ENCODE measurements at regions of chr1 and their contacts with region 1.

Region 1: DNA sequence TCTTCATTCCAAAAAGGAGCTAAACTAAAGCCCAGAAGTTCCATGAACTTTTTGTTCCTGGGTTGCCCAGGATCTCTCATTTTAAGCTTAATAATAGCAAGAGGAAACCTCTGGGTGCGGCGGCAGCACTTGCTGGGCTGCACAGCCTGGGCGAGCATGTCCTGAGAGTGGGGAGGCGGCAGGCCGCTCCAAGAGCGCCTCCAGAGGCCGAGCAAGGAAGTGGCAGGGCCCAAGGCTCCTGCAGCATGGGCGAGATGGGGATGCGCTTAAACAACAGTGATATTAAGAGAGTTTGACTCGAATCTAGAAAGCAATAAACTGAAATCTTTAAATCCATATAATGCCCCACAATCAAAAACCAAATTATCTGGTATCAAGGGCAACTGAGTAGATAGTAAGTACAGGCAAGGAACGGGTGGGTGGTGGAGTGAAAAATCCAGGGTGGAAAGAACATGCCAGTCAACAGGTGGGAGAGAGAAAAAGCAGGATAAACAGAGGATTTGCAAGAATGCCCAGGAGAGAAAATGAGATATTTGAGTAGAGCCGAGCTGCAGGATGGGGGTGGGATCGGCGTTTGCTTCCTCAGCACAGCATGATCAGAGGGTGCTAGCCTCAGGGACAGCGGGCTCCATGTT is 14.1 kb upstream of the TNR start:
- DNase-seq: peak; percentile 59 to 81
- H3K4me3 ChIP-seq: no peak overlapping the region
- H3K27ac ChIP-seq: no peak overlapping the region
- H3K4me1 ChIP-seq: no peaks in the 10 kb centered on the region; a peak in 1 of 7 replicates
- H3K27me3 ChIP-seq: no peaks in the 10 kb centered on the region
- CTCF ChIP-seq: peak; percentile 88 to 94 (median 89)
- EP300 ChIP-seq: no peak
- POLR2A ChIP-seq: no peak
- RAD21 ChIP-seq: peak; percentile 80 to 89

Region 2: DNA sequence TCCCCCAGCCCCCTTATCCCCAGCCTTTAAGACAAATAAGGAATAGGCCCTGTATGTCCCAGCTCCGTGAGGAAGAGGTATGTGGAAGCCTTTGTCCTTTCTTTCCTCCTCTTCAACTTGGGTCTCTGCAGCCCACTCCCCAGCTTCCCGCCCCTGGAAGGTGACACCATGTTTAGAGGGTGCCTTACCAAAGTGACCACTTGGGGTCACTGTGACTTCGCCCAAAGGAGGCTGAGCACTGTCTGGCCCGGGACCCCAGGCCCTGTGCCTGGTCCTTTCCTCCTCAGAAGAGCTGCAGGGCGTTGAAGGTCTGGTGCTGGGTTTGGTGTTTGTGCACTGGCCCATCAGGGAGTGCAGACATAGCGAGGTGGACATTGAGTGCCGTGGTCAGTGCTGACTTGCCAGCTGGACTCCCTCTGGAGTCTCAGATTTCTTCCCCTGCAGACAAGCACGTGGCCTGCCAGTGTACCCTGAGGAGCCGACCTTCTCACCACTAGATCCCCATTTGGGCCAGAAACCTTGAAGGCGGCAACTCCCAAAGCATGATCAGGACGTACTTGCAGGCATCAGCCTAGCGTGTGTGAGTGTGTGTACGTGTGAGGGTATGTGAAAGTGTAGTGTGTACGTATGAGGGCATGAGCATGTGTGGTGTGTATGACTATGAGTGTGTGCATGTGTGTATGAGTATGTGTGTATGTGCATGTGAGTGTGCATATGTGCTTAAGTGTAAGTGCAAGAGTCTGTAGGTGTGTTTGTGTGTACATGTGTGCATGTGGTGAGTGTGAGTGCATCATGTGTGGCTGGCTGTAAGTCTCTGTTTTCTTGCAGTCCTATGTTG is 383.5 kb before region 1 on chr1:
- CTCF ChIA-PET with region 1: interaction called, 25 read pairs
- POLR2A ChIA-PET with region 1: no interaction called
- DNase-seq: peak; percentile 21 to 85
- H3K4me3 ChIP-seq: no peak overlapping the region
- H3K27ac ChIP-seq: no peak overlapping the region
- H3K4me1 ChIP-seq: peaks cover 0 to 4% (median 0%) of the 10 kb centered on the region in 4 experiments; a peak in 3 of 7 replicates
- H3K27me3 ChIP-seq: no peaks in the 10 kb centered on the region; a peak in 1 of 7 replicates
- CTCF ChIP-seq: peak; percentile 86 to 91 (median 90)
- EP300 ChIP-seq: no peak
- POLR2A ChIP-seq: no peak
- RAD21 ChIP-seq: peak; percentile 97 to 99

Region 3: GRCh38 chr1:175683491-175684298 is 73.8 kb before region 1 on chr1:
- CTCF ChIA-PET with region 1: interaction called, 15 read pairs
- POLR2A ChIA-PET with region 1: no interaction called
- DNase-seq: no peak
- H3K4me3 ChIP-seq: no peak overlapping the region
- H3K27ac ChIP-seq: no peak overlapping the region
- H3K4me1 ChIP-seq: peaks cover 0 to 3% (median 0%) of the 10 kb centered on the region in 4 experiments; a peak in 1 of 7 replicates
- H3K27me3 ChIP-seq: no peaks in the 10 kb centered on the region
- CTCF ChIP-seq: no peak
- EP300 ChIP-seq: no peak
- POLR2A ChIP-seq: no peak
- RAD21 ChIP-seq: no peak

Region 4: GRCh38 chr1:175708788-175709187 is 48.7 kb before region 1 on chr1:
- CTCF ChIA-PET with region 1: no interaction called
- POLR2A ChIA-PET with region 1: no interaction called
- DNase-seq: no peak
- H3K4me3 ChIP-seq: no peak overlapping the region
- H3K27ac ChIP-seq: no peak overlapping the region
- H3K4me1 ChIP-seq: peaks cover 0 to 2% (median 0%) of the 10 kb centered on the region in 4 experiments; a peak in 3 of 7 replicates
- H3K27me3 ChIP-seq: no peaks in the 10 kb centered on the region
- CTCF ChIP-seq: no peak
- EP300 ChIP-seq: no peak
- POLR2A ChIP-seq: no peak
- RAD21 ChIP-seq: no peak

Region 5: GRCh38 chr1:175742790-175743459 is 14.6 kb before region 1 on chr1:
- CTCF ChIA-PET with region 1: interaction called, 277 read pairs
- POLR2A ChIA-PET with region 1: no interaction called
- DNase-seq: peak in 1 of 2 experiments; percentile 59
- H3K4me3 ChIP-seq: peak overlapping the region; percentile 12 to 31 (median 18); a peak in 6 of 8 replicates
- H3K27ac ChIP-seq: no peak overlapping the region
- H3K4me1 ChIP-seq: peaks cover 0 to 7% (median 3%) of the 10 kb centered on the region in 4 experiments; a peak in 3 of 7 replicates
- H3K27me3 ChIP-seq: peaks cover 0 to 6% (median 0%) of the 10 kb centered on the region in 4 experiments; a peak in 2 of 7 replicates
- CTCF ChIP-seq: no peak
- EP300 ChIP-seq: no peak
- POLR2A ChIP-seq: no peak
- RAD21 ChIP-seq: peak in 1 of 2 experiments; percentile 31; a peak in 1 of 4 replicates

Region 6: DNA sequence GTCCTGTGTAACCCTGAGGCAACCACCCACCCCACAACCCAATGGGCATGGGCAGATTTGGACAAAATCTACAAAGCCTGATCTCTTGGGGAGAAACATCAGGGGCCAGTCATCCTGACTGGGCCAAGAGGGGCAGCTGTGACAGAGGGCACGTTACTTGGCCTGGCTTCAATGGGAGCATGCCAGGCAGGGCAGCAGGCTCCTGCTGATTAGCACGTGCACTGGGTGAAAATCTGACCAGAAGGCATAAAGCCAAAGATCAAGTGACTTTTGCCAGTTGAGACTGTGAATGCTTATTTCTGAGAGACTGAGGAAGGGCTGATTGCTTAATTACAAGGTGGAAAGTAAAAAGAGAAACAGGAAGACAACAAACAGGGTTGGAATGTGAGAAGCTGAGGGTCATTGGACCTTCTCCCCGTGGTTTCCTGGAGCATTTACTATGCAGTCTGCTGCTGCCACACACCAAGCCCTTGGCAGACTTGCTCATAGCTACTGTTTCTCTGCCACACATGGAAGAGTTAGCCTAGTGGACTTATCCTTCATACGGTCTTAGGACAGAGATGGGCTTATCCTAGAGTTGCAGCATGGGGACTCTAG is 25.7 kb after region 1 on chr1:
- CTCF ChIA-PET with region 1: interaction called, 26 read pairs
- POLR2A ChIA-PET with region 1: no interaction called
- DNase-seq: no peak
- H3K4me3 ChIP-seq: no peak overlapping the region
- H3K27ac ChIP-seq: no peak overlapping the region
- H3K4me1 ChIP-seq: peaks cover 0 to 5% (median 3%) of the 10 kb centered on the region in 4 experiments; a peak in 3 of 7 replicates
- H3K27me3 ChIP-seq: no peaks in the 10 kb centered on the region; a peak in 1 of 7 replicates
- CTCF ChIP-seq: no peak
- EP300 ChIP-seq: no peak
- POLR2A ChIP-seq: no peak
- RAD21 ChIP-seq: no peak

Region 7: GRCh38 chr1:175824079-175824478 is 66.6 kb after region 1 on chr1:
- CTCF ChIA-PET with region 1: interaction called, 24 read pairs
- POLR2A ChIA-PET with region 1: no interaction called
- DNase-seq: peak; percentile 50 to 90
- H3K4me3 ChIP-seq: no peak overlapping the region
- H3K27ac ChIP-seq: no peak overlapping the region
- H3K4me1 ChIP-seq: peaks cover 0 to 1% (median 0%) of the 10 kb centered on the region in 4 experiments; a peak in 1 of 7 replicates
- H3K27me3 ChIP-seq: no peaks in the 10 kb centered on the region
- CTCF ChIP-seq: peak; percentile 61 to 92 (median 83)
- EP300 ChIP-seq: no peak
- POLR2A ChIP-seq: no peak
- RAD21 ChIP-seq: peak; percentile 83 to 89

Region 8: DNA sequence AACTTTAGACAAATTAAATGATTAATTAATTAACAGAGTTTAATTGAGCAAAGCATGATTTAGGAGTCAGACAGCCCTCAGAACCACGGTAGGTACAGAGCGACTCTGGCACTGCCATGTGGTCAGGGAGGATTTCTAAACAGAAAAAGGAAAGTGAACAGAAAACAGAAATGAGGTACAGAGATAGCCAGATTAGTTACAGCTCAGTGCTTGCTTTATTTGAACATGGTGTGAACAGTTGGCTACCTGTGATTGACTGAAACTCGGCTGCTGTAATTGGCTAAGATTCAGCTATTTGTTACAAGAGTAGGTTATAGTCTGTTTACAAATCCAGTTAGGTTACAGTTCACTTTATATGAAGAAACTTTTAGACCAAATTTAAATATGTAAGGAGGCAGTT is 148.9 kb after region 1 on chr1:
- CTCF ChIA-PET with region 1: no interaction called
- POLR2A ChIA-PET with region 1: no interaction called
- DNase-seq: no peak
- H3K4me3 ChIP-seq: no peak overlapping the region
- H3K27ac ChIP-seq: no peak overlapping the region
- H3K4me1 ChIP-seq: no peaks in the 10 kb centered on the region
- H3K27me3 ChIP-seq: peaks cover 66 to 92% (median 82%) of the 10 kb centered on the region in 4 experiments
- CTCF ChIP-seq: no peak
- EP300 ChIP-seq: no peak
- POLR2A ChIP-seq: no peak
- RAD21 ChIP-seq: no peak

Measured in H1 (cell line).